ENCODE measurements at regions of chr9 and their contacts with region 1.

Region 1: GRCh38 chr9:214648-215493 is at the start of gene DOCK8:
- DNase-seq: peak; percentile 76
- H3K4me3 Mint-ChIP-seq: peak within 1 kb of the TSS; percentile 88
- H3K27ac Mint-ChIP-seq: peak within 1 kb of the TSS; percentile 89
- H3K4me1 Mint-ChIP-seq: peaks cover 32% of the 10 kb centered on the region
- H3K27me3 Mint-ChIP-seq: no peaks in the 10 kb centered on the region
- total RNA-seq, gene DOCK8: 370 to 374 TPM

Region 2: DNA sequence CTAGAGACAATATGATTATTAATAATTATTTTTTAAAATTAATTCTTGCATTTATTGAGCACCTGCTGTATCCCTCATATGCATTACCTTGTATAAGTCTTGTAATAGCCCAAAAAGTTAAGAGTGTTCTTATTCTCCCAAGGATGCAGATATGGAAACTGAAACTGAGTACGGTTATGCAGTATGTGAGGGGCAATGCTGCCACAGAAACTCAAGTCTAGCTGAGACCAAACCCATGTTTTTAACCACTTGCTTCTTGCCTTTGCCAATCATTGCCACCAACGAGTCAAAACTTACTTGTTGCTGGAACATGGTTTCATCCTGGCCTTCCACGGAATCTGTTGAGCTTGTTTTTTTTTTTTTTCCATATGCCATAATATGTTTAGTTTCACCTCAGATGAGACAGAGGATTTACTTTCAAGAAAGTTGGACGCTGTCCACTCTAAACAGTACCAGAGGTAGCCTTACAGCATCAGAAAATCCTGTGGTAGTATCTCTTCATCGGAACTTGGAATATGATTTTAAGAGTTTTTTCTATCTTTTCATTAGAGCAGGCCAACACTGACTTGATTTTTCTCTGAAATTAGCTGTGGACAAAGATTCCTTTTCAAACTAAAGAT is 27.7 kb after region 1 on chr9:
- CTCF ChIA-PET with region 1: interaction called, 6 read pairs
- POLR2A ChIA-PET with region 1: interaction called, 84 read pairs
- DNase-seq: peak; percentile 42
- H3K4me3 Mint-ChIP-seq: peak overlapping the region; percentile 61
- H3K27ac Mint-ChIP-seq: peak overlapping the region; percentile 79
- H3K4me1 Mint-ChIP-seq: peaks cover 71% of the 10 kb centered on the region
- H3K27me3 Mint-ChIP-seq: no peaks in the 10 kb centered on the region

Region 3: GRCh38 chr9:265209-265875 is 50.5 kb after region 1 on chr9:
- CTCF ChIA-PET with region 1: interaction called, 3 read pairs
- POLR2A ChIA-PET with region 1: interaction called, 14 read pairs
- DNase-seq: no peak
- H3K4me3 Mint-ChIP-seq: no peak overlapping the region
- H3K27ac Mint-ChIP-seq: no peak overlapping the region
- H3K4me1 Mint-ChIP-seq: peaks cover 65% of the 10 kb centered on the region
- H3K27me3 Mint-ChIP-seq: no peaks in the 10 kb centered on the region

Region 4: GRCh38 chr9:278651-279050 is 63.8 kb after region 1 on chr9:
- CTCF ChIA-PET with region 1: interaction called, 27 read pairs
- POLR2A ChIA-PET with region 1: interaction called, 197 read pairs
- DNase-seq: peak; percentile 77
- H3K4me3 Mint-ChIP-seq: no peak overlapping the region
- H3K27ac Mint-ChIP-seq: no peak overlapping the region
- H3K4me1 Mint-ChIP-seq: peaks cover 35% of the 10 kb centered on the region
- H3K27me3 Mint-ChIP-seq: no peaks in the 10 kb centered on the region

Region 5: DNA sequence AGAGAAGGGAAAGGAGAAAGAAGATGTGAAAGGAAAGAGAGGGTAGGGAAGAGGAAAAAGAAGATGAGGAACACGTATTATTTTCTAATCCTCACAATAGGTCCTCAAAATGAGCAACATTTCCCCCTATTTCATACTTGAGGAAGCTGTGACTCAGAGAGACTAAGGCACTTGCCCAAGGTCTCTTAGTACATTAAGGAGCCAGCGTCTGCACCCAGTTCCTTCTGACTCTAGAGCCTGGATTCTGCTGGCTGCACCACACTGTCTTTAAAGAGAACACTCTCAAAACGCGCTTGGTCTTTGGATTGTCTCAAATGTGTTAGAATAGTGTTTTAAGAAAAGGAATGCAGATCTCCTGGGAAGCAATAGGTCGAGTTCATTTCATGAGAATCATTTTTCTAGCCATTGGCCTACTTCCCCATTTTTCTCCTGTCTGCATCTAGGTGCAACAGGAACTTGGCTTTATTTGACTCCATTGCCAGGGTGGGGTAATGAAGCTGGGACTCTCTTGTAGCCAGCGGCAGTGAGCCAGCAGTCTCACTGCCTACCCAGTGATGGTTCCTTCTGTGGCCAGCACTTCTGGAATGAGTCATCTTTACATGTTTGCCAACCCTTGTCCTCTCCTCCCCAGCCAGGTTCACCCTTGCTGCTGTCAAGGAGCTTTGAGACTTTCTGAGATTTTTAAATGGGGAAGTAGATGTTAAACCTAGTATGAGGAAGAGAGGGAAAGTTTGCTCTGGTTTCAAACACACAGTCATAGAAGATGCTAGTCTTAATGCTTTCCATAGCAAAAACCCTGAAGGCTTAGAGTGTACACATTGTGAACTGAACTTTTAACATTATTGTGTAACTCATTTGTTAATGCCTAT is 82.5 kb after region 1 on chr9:
- CTCF ChIA-PET with region 1: interaction called, 28 read pairs
- POLR2A ChIA-PET with region 1: interaction called, 19 read pairs
- DNase-seq: no peak
- H3K4me3 Mint-ChIP-seq: no peak overlapping the region
- H3K27ac Mint-ChIP-seq: peak overlapping the region; percentile 71
- H3K4me1 Mint-ChIP-seq: peaks cover 59% of the 10 kb centered on the region
- H3K27me3 Mint-ChIP-seq: no peaks in the 10 kb centered on the region

Region 6: GRCh38 chr9:324971-325370 is 110.1 kb after region 1 on chr9:
- CTCF ChIA-PET with region 1: no interaction called
- POLR2A ChIA-PET with region 1: no interaction called
- DNase-seq: no peak
- H3K4me3 Mint-ChIP-seq: no peak overlapping the region
- H3K27ac Mint-ChIP-seq: no peak overlapping the region
- H3K4me1 Mint-ChIP-seq: no peaks in the 10 kb centered on the region
- H3K27me3 Mint-ChIP-seq: no peaks in the 10 kb centered on the region

Region 7: DNA sequence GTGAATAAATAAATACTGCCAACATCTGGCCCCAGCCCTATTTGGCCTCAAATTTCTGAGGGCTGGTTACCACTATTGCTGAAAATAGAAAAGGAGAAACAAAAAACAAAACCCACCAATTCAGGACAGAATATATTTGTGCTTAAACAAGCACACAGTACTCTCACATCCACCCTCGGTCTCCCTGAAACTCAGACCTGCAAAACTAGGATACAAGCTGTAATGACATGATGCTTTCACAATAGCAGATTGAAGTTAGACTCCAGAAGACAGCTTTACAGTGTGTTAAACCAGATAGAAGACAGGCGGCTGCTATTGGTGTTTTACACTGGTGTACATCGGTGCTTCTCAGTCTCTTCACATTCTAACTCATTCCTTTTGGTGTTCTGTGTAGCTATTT is 411.7 kb after region 1 on chr9:
- CTCF ChIA-PET with region 1: no interaction called
- POLR2A ChIA-PET with region 1: no interaction called
- DNase-seq: no peak
- H3K4me3 Mint-ChIP-seq: no peak overlapping the region
- H3K27ac Mint-ChIP-seq: no peak overlapping the region
- H3K4me1 Mint-ChIP-seq: peaks cover 11% of the 10 kb centered on the region
- H3K27me3 Mint-ChIP-seq: no peaks in the 10 kb centered on the region